BJ (cell line): ENCODE measurements at regions of chr12 and their contacts with region 1.

Region 1: DNA sequence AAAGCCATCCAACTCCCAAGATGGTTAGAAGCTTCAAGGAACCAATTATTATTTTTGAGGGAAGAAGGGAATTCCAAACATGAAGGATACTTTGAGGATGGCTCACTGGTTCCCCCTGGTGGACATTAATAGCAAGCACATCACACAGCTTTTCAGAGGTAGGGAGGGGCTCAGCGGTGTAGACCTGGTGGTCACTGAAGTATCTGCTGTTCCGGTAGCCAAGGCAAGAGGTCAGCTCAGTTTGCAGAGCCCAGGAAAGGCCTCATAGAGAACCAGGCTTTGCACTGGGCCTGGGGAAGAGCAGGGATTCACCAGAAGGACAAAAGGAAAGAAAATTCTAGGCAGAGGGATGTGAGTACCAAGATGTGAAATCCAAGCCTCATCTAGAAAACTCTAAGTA is 118.7 kb downstream of the KSR2 start:
- DNase-seq: no peak
- H3K4me3 ChIP-seq: no peak overlapping the region
- H3K27me3 ChIP-seq: peaks cover 5% of the 10 kb centered on the region; the same call in 1 of the 2 replicates
- CTCF ChIP-seq: peak; percentile 90

Region 2: DNA sequence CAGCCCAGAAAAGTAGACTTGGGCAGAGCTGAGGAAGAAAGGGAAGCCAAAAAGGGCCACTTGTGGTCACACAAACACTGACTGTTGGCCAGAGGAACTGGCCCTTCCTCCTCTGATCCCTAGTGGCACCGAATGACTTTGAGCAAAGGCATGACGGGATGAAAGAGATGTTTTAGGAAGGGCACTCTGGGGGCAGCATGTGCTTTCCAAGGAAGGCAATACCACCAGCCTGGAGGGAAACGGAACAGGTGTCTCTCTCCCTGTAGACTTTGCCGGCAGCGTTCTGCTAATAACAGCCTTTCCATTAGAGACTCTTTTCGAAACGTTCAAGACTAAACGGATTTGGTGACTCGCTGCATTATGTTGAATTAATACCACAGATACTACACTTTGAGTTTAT is 647.5 kb before region 1 on chr12:
- CTCF ChIA-PET with region 1: interaction called, 10 read pairs
- POLR2A ChIA-PET with region 1: no interaction called
- DNase-seq: no peak
- H3K4me3 ChIP-seq: no peak overlapping the region
- H3K27me3 ChIP-seq: no peaks in the 10 kb centered on the region; the same call in 1 of the 2 replicates
- CTCF ChIP-seq: no peak

Region 3: GRCh38 chr12:117890137-117890536 is 40.1 kb after region 1 on chr12:
- CTCF ChIA-PET with region 1: no interaction called
- POLR2A ChIA-PET with region 1: no interaction called
- DNase-seq: no peak
- H3K4me3 ChIP-seq: no peak overlapping the region
- H3K27me3 ChIP-seq: no peaks in the 10 kb centered on the region
- CTCF ChIP-seq: no peak

Region 4: DNA sequence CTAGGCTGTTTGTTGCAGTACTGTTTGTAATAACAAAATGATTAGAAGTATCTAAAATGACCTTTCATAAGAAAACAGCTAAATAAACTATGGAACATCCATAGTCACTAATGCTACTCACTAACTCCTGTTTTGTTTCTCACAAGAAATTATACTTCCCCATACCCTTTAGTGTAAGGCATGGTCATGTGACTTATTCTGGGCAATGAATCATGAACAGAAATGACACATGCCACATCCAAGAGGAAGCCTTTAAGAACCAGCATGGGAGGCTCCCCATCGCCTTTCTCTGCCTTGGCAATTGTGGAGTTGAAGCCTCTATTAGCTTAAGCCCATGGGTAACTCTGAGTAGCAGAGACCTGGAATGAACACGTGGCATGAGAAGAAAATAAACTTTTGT is 69.4 kb after region 1 on chr12:
- CTCF ChIA-PET with region 1: no interaction called
- POLR2A ChIA-PET with region 1: no interaction called
- DNase-seq: no peak
- H3K4me3 ChIP-seq: no peak overlapping the region
- H3K27me3 ChIP-seq: no peaks in the 10 kb centered on the region
- CTCF ChIP-seq: no peak